ENCODE measurements at regions of chrX and their contacts with region 1.

Region 1: GRCh38 chrX:138775517-138775916 is 64.0 kb upstream of the FGF13 start:
- DNase-seq: no peak
- H3K4me3 Mint-ChIP-seq: no peak overlapping the region
- H3K27ac Mint-ChIP-seq: no peak overlapping the region
- H3K4me1 Mint-ChIP-seq: no peaks in the 10 kb centered on the region
- H3K27me3 Mint-ChIP-seq: peaks cover 2% of the 10 kb centered on the region

Region 2: DNA sequence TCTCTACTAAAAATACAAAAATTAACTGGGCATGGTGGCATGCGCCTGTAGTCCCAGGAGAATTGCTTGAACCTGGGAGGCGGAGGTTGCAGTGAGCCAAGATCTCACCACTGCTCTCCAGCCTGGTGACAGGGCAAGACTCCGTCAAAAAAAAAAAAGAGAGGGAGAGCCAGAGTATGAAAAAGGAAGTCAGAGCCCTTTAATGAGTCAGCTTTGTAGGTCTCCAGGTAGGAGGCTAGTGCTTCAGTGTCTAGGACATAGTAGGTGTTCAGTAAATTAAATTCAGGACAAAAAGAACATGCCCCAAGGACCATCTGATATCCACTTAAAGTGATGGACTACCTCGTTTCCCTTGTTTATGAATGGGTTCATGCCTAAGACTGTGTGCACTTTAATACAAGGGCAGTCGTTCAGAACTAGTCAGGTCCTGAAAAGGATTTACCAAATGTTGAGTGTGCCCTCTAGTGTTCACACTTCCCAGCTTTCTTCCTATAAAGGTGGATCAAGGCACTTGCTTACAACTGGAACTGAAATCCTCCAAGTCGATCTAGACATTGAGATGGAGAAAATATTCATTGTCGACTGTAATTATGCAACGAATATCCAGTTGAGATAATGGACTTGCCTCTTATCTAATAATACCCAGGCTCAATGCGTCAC is 784.0 kb after region 1 on chrX:
- intact Hi-C with region 1: loop called (anchors 5 kb)
- DNase-seq: no peak
- H3K4me3 Mint-ChIP-seq: no peak overlapping the region
- H3K27ac Mint-ChIP-seq: no peak overlapping the region
- H3K4me1 Mint-ChIP-seq: no peaks in the 10 kb centered on the region
- H3K27me3 Mint-ChIP-seq: peaks cover 2% of the 10 kb centered on the region

Region 3: GRCh38 chrX:139759637-139760036 is 984.1 kb after region 1 on chrX:
- intact Hi-C with region 1: loop called (anchors 5 kb)
- DNase-seq: no peak
- H3K4me3 Mint-ChIP-seq: no peak overlapping the region
- H3K27ac Mint-ChIP-seq: no peak overlapping the region
- H3K4me1 Mint-ChIP-seq: no peaks in the 10 kb centered on the region
- H3K27me3 Mint-ChIP-seq: no peaks in the 10 kb centered on the region

Region 4: GRCh38 chrX:139971394-139971749 is 1195.9 kb after region 1 on chrX:
- intact Hi-C with region 1: loop called (anchors 2 kb)
- DNase-seq: no peak
- H3K4me3 Mint-ChIP-seq: no peak overlapping the region
- H3K27ac Mint-ChIP-seq: no peak overlapping the region
- H3K4me1 Mint-ChIP-seq: no peaks in the 10 kb centered on the region
- H3K27me3 Mint-ChIP-seq: peaks cover 3% of the 10 kb centered on the region

Measured in activated T-helper 1 cell treated with anti-CD3 and anti-CD28 coated beads, Interleukin-12 subunit alpha, Interleukin-12 subunit beta, Interleukin-2, Interleukin-4 antibody, amounts not matched to agents 30 ng/mL and 10 ng/mL and 1 ng/mL, durations not matched to agents 14 hours and 24 hours and 36 hours (primary cell).